ENCODE measurements at regions of chr7 and their contacts with region 1.

Region 1: GRCh38 chr7:116776610-116777289 is 85.6 kb upstream of the CAPZA2 start:
- DNase-seq: peak; percentile 78
- H3K4me3 ChIP-seq: no peak overlapping the region
- H3K27ac ChIP-seq: peak overlapping the region; percentile 47
- H3K4me1 ChIP-seq: peaks cover 53% of the 10 kb centered on the region
- H3K27me3 ChIP-seq: no peaks in the 10 kb centered on the region
- CTCF ChIP-seq: no peak
- POLR2A ChIP-seq: no peak

Region 2: GRCh38 chr7:116511552-116512519 is 264.9 kb before region 1 on chr7:
- CTCF ChIA-PET with region 1: no interaction called
- POLR2A ChIA-PET with region 1: no interaction called
- dilution Hi-C with region 1: no loop called
- intact Hi-C with region 1: no loop called
- DNase-seq: peak; percentile 96
- H3K4me3 ChIP-seq: peak overlapping the region; percentile 32 to 70 (median 45)
- H3K27ac ChIP-seq: peak overlapping the region; percentile 96
- H3K4me1 ChIP-seq: peaks cover 54% of the 10 kb centered on the region
- H3K27me3 ChIP-seq: no peaks in the 10 kb centered on the region
- CTCF ChIP-seq: no peak
- POLR2A ChIP-seq: peak; percentile 76

Region 3: DNA sequence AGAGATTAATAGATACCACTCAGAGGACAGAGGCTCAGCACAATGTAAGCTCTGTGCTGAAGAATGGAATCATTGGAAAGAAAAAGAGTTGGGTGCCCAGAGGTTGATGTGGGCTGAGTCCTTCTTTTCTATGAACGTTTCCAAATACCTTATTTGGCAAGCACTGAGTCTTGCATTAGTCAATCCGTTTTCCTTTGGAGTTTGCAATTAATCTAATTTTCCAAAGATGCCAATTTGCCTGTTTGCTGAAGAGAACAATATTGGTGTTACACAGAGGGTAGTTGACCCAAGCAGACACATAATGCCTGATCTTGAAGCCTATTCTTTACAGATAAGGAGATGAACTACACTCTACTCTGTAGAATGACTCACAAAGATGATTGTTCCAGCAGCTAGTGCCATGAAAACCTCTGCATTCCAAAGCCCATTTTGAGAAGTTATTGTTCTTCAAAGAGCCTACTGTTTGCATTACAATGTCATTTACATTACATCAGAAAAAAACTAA is 160.1 kb before region 1 on chr7:
- CTCF ChIA-PET with region 1: no interaction called
- POLR2A ChIA-PET with region 1: no interaction called
- dilution Hi-C with region 1: no loop called
- intact Hi-C with region 1: loop called (anchors 2 kb)
- DNase-seq: peak; percentile 91
- H3K4me3 ChIP-seq: no peak overlapping the region
- H3K27ac ChIP-seq: peak overlapping the region; percentile 87
- H3K4me1 ChIP-seq: peaks cover 35% of the 10 kb centered on the region
- H3K27me3 ChIP-seq: no peaks in the 10 kb centered on the region
- CTCF ChIP-seq: no peak
- POLR2A ChIP-seq: no peak

Region 4: GRCh38 chr7:116706668-116707126 is 70.1 kb before region 1 on chr7:
- CTCF ChIA-PET with region 1: interaction called, 4 read pairs
- POLR2A ChIA-PET with region 1: interaction called, 5 read pairs
- dilution Hi-C with region 1: no loop called
- intact Hi-C with region 1: loop called (anchors 2 kb)
- DNase-seq: peak; percentile 82
- H3K4me3 ChIP-seq: peak overlapping the region in 2 of 3 experiments; percentile 9 to 52
- H3K27ac ChIP-seq: peak overlapping the region; percentile 76
- H3K4me1 ChIP-seq: peaks cover 42% of the 10 kb centered on the region
- H3K27me3 ChIP-seq: no peaks in the 10 kb centered on the region
- CTCF ChIP-seq: no peak
- POLR2A ChIP-seq: no peak

Region 5: DNA sequence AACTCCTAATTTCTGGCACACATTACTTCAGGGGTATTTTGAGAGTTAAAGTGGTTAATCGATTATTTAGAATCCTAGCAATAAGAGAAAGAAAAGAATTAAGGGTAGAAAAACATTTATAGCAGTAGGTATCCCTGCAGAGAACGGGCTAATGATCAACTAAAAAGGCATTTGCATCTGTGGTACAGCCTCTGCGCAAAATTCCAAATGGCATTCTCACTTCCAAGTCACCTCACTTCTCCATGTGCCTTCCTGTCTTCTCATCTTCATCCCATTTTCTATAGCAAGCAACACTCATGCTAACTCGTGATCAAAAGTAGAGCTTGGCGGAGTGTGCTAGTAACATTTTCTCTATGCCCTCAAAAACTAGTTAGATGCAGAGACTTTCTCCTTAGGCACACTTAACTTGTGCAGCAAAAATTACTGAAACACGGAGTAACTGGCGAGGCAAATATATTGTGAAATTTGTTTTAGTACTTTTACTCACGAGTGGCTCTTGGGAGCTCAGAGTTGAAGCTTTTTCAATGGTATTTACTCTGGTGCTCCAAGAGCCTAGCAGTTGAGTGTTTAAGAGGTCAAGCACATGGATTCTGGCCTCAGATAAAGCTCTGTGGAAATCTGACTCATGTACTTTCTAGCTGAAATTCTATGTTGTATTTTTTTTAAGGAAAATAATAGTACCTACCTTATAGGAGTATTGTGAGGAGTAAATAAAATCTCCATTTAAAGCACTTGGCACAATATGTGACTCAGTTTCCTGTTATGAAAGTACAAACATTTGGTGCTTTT is 39.6 kb before region 1 on chr7:
- CTCF ChIA-PET with region 1: interaction called, 3 read pairs
- POLR2A ChIA-PET with region 1: interaction called, 4 read pairs
- dilution Hi-C with region 1: no loop called
- intact Hi-C with region 1: loop called (anchors 2 kb)
- DNase-seq: peak; percentile 90
- H3K4me3 ChIP-seq: peak overlapping the region in 1 of 3 experiments; percentile 19
- H3K27ac ChIP-seq: peak overlapping the region; percentile 58
- H3K4me1 ChIP-seq: peaks cover 40% of the 10 kb centered on the region
- H3K27me3 ChIP-seq: no peaks in the 10 kb centered on the region
- CTCF ChIP-seq: no peak
- POLR2A ChIP-seq: no peak

Region 6: GRCh38 chr7:116802746-116803152 is 26.0 kb after region 1 on chr7:
- CTCF ChIA-PET with region 1: interaction called, 3 read pairs
- POLR2A ChIA-PET with region 1: interaction called, 3 read pairs
- dilution Hi-C with region 1: no loop called
- intact Hi-C with region 1: loop called (anchors 1 kb)
- DNase-seq: peak; percentile 75
- H3K4me3 ChIP-seq: no peak overlapping the region
- H3K27ac ChIP-seq: no peak overlapping the region
- H3K4me1 ChIP-seq: peaks cover 14% of the 10 kb centered on the region
- H3K27me3 ChIP-seq: no peaks in the 10 kb centered on the region
- CTCF ChIP-seq: peak; percentile 40 to 46
- POLR2A ChIP-seq: no peak

Region 7: GRCh38 chr7:116876664-116877442 is 100.1 kb after region 1 on chr7:
- CTCF ChIA-PET with region 1: no interaction called
- POLR2A ChIA-PET with region 1: no interaction called
- dilution Hi-C with region 1: no loop called
- intact Hi-C with region 1: loop called (anchors 5 kb)
- DNase-seq: peak; percentile 99
- H3K4me3 ChIP-seq: peak overlapping the region in 1 of 3 experiments; percentile 27
- H3K27ac ChIP-seq: peak overlapping the region; percentile 65
- H3K4me1 ChIP-seq: peaks cover 69% of the 10 kb centered on the region
- H3K27me3 ChIP-seq: no peaks in the 10 kb centered on the region
- CTCF ChIP-seq: peak; percentile 18 to 27
- POLR2A ChIP-seq: peak; percentile 90

Region 8: GRCh38 chr7:116970238-116970910 is 193.6 kb after region 1 on chr7:
- CTCF ChIA-PET with region 1: no interaction called
- POLR2A ChIA-PET with region 1: no interaction called
- dilution Hi-C with region 1: no loop called
- intact Hi-C with region 1: no loop called
- DNase-seq: no peak
- H3K4me3 ChIP-seq: no peak overlapping the region
- H3K27ac ChIP-seq: no peak overlapping the region
- H3K4me1 ChIP-seq: no peaks in the 10 kb centered on the region
- H3K27me3 ChIP-seq: no peaks in the 10 kb centered on the region
- CTCF ChIP-seq: no peak
- POLR2A ChIP-seq: no peak

Region 9: DNA sequence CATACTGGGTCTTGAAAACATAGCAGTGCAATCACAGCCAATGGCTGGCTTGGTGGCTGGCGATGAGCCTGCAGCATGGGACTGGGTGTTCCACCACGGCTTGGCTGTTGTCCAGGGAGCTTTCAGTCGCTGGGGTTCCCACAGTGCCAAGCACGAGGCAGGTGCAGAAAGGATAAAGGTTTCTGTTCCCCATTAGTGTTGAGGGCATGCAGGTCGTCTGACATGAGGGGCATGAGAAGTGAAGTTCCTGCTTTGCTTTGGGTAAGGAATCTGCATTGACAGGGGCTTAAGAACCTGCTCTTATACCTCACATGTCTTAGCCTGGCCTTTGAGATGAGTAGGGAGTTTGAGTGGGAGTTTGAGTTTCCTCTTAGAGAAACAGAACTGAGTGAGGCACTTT is 694.0 kb after region 1 on chr7:
- CTCF ChIA-PET with region 1: no interaction called
- POLR2A ChIA-PET with region 1: no interaction called
- dilution Hi-C with region 1: no loop called
- intact Hi-C with region 1: no loop called
- DNase-seq: no peak
- H3K4me3 ChIP-seq: no peak overlapping the region
- H3K27ac ChIP-seq: no peak overlapping the region
- H3K4me1 ChIP-seq: no peaks in the 10 kb centered on the region
- H3K27me3 ChIP-seq: peaks cover 0 to 5% of the 10 kb centered on the region in 2 experiments
- CTCF ChIP-seq: no peak
- POLR2A ChIP-seq: no peak

Measured in endothelial cell of umbilical vein (primary cell).